ENCODE measurements at regions of chr10 and their contacts with region 1.

Region 1: GRCh38 chr10:72126184-72126871 is 38.0 kb upstream of the SPOCK2 start:
- DNase-seq: peak in 1 of 2 experiments; percentile 49
- H3K4me3 ChIP-seq: no peak overlapping the region
- H3K4me3 Mint-ChIP-seq: no peak overlapping the region
- H3K27ac Mint-ChIP-seq: no peak overlapping the region
- H3K4me1 ChIP-seq: peaks cover 7% of the 10 kb centered on the region; the same call in 1 of the 2 replicates
- H3K4me1 Mint-ChIP-seq: peaks cover 13% of the 10 kb centered on the region
- H3K27me3 ChIP-seq: no peaks in the 10 kb centered on the region
- H3K27me3 Mint-ChIP-seq: no peaks in the 10 kb centered on the region
- CTCF ChIP-seq: peak; percentile 60 to 69

Region 2: GRCh38 chr10:71696628-71697326 is 429.6 kb before region 1 on chr10:
- CTCF ChIA-PET with region 1: no interaction called
- POLR2A ChIA-PET with region 1: no interaction called
- intact Hi-C with region 1: no loop called
- DNase-seq: peak; percentile 77 to 85
- H3K4me3 ChIP-seq: no peak overlapping the region
- H3K4me3 Mint-ChIP-seq: no peak overlapping the region
- H3K27ac Mint-ChIP-seq: no peak overlapping the region
- H3K4me1 ChIP-seq: no peaks in the 10 kb centered on the region
- H3K4me1 Mint-ChIP-seq: no peaks in the 10 kb centered on the region
- H3K27me3 ChIP-seq: no peaks in the 10 kb centered on the region
- H3K27me3 Mint-ChIP-seq: peaks cover 4% of the 10 kb centered on the region
- CTCF ChIP-seq: peak; percentile 97 to 99

Region 3: GRCh38 chr10:71812016-71812912 is 314.1 kb before region 1 on chr10:
- CTCF ChIA-PET with region 1: no interaction called
- POLR2A ChIA-PET with region 1: no interaction called
- intact Hi-C with region 1: no loop called
- DNase-seq: peak; percentile 74 to 91
- H3K4me3 ChIP-seq: no peak overlapping the region
- H3K4me3 Mint-ChIP-seq: no peak overlapping the region
- H3K27ac Mint-ChIP-seq: no peak overlapping the region
- H3K4me1 ChIP-seq: no peaks in the 10 kb centered on the region
- H3K4me1 Mint-ChIP-seq: peaks cover 7% of the 10 kb centered on the region
- H3K27me3 ChIP-seq: no peaks in the 10 kb centered on the region
- H3K27me3 Mint-ChIP-seq: no peaks in the 10 kb centered on the region
- CTCF ChIP-seq: peak; percentile 98

Region 4: GRCh38 chr10:72061491-72061890 is 64.8 kb before region 1 on chr10:
- CTCF ChIA-PET with region 1: no interaction called
- POLR2A ChIA-PET with region 1: no interaction called
- intact Hi-C with region 1: loop called (anchors 5 kb)
- DNase-seq: peak in 1 of 2 experiments; percentile 61
- H3K4me3 ChIP-seq: no peak overlapping the region
- H3K4me3 Mint-ChIP-seq: no peak overlapping the region
- H3K27ac Mint-ChIP-seq: no peak overlapping the region
- H3K4me1 ChIP-seq: 0 out of 2 replicates have a peak, but pooled peaks cover 3% of the 10 kb centered on the region
- H3K4me1 Mint-ChIP-seq: no peaks in the 10 kb centered on the region
- H3K27me3 ChIP-seq: no peaks in the 10 kb centered on the region
- H3K27me3 Mint-ChIP-seq: no peaks in the 10 kb centered on the region
- CTCF ChIP-seq: peak; percentile 46 to 68

Region 5: GRCh38 chr10:72173635-72174296 is 47.4 kb after region 1 on chr10:
- CTCF ChIA-PET with region 1: interaction called, 6 read pairs
- POLR2A ChIA-PET with region 1: no interaction called
- intact Hi-C with region 1: loop called (anchors 5 kb)
- DNase-seq: no peak
- H3K4me3 ChIP-seq: no peak overlapping the region
- H3K4me3 Mint-ChIP-seq: no peak overlapping the region
- H3K27ac Mint-ChIP-seq: no peak overlapping the region
- H3K4me1 ChIP-seq: peaks cover 24% of the 10 kb centered on the region
- H3K4me1 Mint-ChIP-seq: peaks cover 19% of the 10 kb centered on the region
- H3K27me3 ChIP-seq: no peaks in the 10 kb centered on the region
- H3K27me3 Mint-ChIP-seq: no peaks in the 10 kb centered on the region
- CTCF ChIP-seq: no peak

Region 6: GRCh38 chr10:72223743-72224101 is 97.4 kb after region 1 on chr10:
- CTCF ChIA-PET with region 1: interaction called, 7 read pairs
- POLR2A ChIA-PET with region 1: no interaction called
- intact Hi-C with region 1: loop called (anchors 1 kb)
- DNase-seq: no peak
- H3K4me3 ChIP-seq: no peak overlapping the region
- H3K4me3 Mint-ChIP-seq: no peak overlapping the region
- H3K27ac Mint-ChIP-seq: no peak overlapping the region
- H3K4me1 ChIP-seq: no peaks in the 10 kb centered on the region
- H3K4me1 Mint-ChIP-seq: no peaks in the 10 kb centered on the region
- H3K27me3 ChIP-seq: no peaks in the 10 kb centered on the region
- H3K27me3 Mint-ChIP-seq: no peaks in the 10 kb centered on the region
- CTCF ChIP-seq: no peak

Region 7: DNA sequence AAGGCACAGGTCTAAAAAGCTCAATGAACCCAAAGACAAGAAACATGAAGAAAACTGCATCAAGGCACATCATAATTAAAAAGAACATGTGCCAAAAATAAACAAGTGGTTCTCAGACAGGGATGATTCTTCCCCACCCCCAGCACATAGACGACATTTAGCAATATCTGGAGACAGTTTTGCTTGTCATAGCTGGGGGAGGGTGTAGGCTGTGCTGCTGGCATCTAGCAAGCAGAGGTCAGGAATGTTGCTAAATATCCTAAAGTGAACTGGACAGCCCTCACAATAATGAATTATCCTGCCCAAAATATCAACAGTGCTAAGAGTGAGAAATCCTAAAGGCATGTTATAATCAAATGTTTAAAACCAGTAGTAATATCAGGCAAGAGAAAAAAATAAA is 376.9 kb after region 1 on chr10:
- CTCF ChIA-PET with region 1: no interaction called
- POLR2A ChIA-PET with region 1: no interaction called
- intact Hi-C with region 1: no loop called
- DNase-seq: no peak
- H3K4me3 ChIP-seq: no peak overlapping the region
- H3K4me3 Mint-ChIP-seq: no peak overlapping the region
- H3K27ac Mint-ChIP-seq: no peak overlapping the region
- H3K4me1 ChIP-seq: no peaks in the 10 kb centered on the region
- H3K4me1 Mint-ChIP-seq: no peaks in the 10 kb centered on the region
- H3K27me3 ChIP-seq: no peaks in the 10 kb centered on the region
- H3K27me3 Mint-ChIP-seq: no peaks in the 10 kb centered on the region
- CTCF ChIP-seq: no peak